ENCODE measurements at regions of chr1 and their contacts with region 1.

Region 1: GRCh38 chr1:18902523-18903290 is at the start of gene ALDH4A1:
- DNase-seq: peak; percentile 93
- H3K4me3 ChIP-seq: peak within 1 kb of the TSS; percentile 58
- H3K27me3 ChIP-seq: no peaks in the 10 kb centered on the region
- CTCF ChIP-seq: no peak
- polyA plus RNA-seq, gene ALDH4A1: 18.1 and 36.6 TPM in 2 replicates

Region 2: GRCh38 chr1:18890711-18891425 is 11.8 kb before region 1 on chr1:
- CTCF ChIA-PET with region 1: interaction called, 34 read pairs
- POLR2A ChIA-PET with region 1: no interaction called
- DNase-seq: peak; percentile 14
- H3K4me3 ChIP-seq: no peak overlapping the region
- H3K27me3 ChIP-seq: no peaks in the 10 kb centered on the region
- CTCF ChIP-seq: no peak

Region 3: DNA sequence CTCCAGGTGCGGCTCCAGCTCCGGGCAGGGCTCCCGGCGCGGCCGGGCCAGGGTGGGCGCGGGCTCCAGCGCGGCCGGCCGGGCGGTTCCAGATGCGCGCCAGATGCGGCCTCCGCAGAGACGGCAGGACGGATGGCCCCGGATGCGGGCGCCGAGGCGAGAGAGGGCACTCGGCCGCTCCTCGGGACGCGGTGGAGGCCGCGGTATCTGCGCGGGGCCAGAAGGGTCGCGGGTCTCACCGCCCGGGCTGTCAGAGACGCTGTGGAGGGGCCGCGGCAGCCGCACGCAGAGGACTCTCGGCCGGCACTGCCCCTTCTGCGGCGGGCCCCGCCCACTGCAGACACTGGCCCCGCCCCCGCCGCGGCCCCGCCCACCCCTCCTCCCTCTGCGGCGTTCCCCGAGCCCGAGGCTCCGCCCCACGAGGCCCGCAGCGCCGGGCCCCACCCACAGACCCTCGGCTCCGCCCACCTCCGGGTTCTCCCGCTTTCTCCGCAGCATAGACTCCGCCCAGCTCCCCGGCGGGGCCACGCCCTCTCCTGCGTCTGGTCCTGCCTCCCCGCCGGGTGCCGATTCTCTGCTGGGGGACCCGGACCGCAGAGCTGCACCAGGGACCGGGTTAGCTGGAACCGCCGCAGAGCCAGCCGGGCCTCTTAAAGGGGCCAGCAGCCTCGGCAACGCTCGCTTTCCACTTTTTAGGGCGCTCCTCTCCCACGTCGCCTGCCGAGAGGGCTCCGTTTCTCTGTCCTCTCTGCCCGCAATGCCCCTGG is 53.8 kb after region 1 on chr1 and contains the start of gene IFFO2:
- CTCF ChIA-PET with region 1: interaction called, 26 read pairs
- POLR2A ChIA-PET with region 1: no interaction called
- DNase-seq: peak; percentile 50
- H3K4me3 ChIP-seq: peak within 1 kb of the TSS; percentile 88
- H3K27me3 ChIP-seq: 0 out of 2 replicates have a peak, but pooled peaks cover 2% of the 10 kb centered on the region
- CTCF ChIP-seq: no peak
- polyA plus RNA-seq, gene IFFO2: 11.1 and 15.0 TPM in 2 replicates

Region 4: DNA sequence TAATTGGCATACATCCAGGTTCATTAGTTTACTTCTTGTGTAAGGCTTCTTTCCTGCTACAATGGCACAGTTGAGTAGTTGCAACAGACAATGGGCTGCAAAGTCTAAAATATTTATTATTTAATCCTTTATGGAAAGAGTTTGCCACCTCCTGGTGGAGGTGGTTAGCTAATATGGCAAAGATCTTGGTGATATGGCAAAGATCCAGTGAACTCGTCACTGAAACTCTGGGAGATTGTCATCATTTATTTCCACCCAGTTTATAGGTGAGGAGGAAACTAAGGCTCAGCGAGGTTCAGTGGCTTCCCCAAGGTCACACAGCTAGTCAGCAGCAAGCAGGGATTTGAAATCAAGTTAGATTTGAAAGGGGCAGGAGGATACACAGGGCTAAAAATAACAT is 69.8 kb after region 1 on chr1:
- CTCF ChIA-PET with region 1: interaction called, 24 read pairs
- POLR2A ChIA-PET with region 1: no interaction called
- DNase-seq: no peak
- H3K4me3 ChIP-seq: no peak overlapping the region
- H3K27me3 ChIP-seq: no peaks in the 10 kb centered on the region
- CTCF ChIP-seq: 0 out of 2 replicates have a peak, but pooled peaks have one; percentile 25

Region 5: DNA sequence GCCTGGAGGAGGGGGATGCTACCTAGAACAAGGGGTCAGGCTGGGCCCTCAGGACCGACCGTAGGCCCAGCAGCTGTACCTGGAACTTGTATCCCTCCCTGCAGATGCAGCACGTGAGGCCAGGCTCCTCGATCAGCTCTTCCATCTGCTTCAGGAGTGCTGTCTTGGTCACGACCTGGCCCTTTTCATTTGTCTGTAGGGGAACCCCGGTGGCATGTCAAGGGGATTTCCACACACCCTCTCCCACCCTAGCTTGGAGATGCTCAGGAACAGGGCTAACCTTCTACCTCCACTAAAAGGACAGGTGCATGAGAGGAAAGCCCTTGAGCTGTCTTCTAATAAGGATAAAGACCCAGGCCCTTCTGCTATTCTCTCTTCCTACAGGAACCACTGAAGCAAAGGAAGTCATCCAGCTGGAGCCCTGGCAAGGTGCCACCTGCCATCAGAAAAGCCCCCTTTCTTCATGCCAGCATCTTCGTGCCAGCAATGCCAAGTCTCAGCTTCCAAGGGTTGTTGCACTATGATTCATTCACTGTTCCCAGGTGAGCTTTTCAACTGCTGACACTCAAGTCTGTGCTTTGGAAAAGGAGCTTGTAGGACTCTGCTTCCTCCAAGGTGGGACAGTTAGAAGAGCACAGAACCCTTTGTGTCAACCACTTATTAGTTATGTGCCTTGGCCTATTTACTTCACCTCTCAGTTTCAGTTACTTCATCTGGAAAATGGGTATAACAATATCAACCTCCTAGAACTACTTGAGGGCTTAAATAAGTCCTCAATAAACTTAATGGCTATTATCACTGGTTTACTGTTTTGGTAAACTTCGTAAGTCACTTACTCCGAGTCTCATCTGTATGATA is 185.3 kb after region 1 on chr1:
- CTCF ChIA-PET with region 1: interaction called, 20 read pairs
- POLR2A ChIA-PET with region 1: no interaction called
- DNase-seq: no peak
- H3K4me3 ChIP-seq: no peak overlapping the region
- H3K27me3 ChIP-seq: no peaks in the 10 kb centered on the region
- CTCF ChIP-seq: no peak

Region 6: GRCh38 chr1:19113697-19114092 is 211.0 kb after region 1 on chr1:
- CTCF ChIA-PET with region 1: interaction called, 27 read pairs
- POLR2A ChIA-PET with region 1: no interaction called
- DNase-seq: no peak
- H3K4me3 ChIP-seq: no peak overlapping the region
- H3K27me3 ChIP-seq: no peaks in the 10 kb centered on the region
- CTCF ChIP-seq: peak; percentile 57

Measured in BJ (cell line).